ENCODE measurements at regions of chr4 and their contacts with region 1.

Region 1: DNA sequence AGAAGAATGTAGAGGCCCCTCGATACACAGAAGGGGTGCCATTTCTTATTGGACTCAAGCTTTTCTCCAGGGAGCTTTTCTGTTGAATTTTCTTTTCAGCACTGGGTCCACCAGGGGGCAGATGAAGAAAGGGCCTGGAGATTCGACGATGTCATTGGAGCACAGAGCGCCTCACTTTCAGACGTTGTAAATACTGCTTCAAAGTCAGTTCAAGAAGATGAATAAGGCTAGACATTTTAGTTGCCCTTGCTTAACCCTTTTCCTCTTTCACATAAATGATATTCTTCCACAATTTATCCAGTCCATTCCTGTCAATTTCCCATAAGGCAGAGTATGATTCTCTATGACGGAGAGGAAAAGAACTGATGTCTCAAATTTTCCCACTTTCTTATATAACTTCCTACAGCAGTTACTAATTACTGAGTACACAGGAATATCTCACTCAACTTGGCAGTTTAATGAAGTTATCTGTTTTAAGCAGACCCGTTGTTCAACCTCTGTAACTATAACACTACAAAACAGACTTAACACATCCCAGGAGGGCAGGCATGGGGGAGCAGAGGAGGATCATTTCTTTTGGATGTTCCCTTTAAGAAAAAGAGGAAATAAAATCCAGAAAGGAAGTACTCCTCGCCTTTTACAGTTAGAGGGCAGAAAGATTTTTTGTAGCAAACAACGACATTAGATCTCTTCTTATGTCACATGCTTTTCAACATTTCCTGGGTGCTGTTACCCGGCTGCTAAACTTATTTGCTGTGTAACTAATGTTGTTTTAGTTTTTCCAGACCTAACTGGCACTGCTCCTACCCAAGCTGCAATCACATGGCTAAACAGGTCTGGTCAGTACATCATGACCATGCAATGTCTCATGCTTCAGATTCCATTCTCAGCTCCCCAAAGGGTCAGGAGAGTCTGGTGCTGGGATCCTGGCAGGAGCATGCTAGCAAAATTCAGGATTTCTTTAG is 12.2 kb upstream of the CENPU start:
- DNase-seq: peak; percentile 56
- H3K4me3 Mint-ChIP-seq: no peak overlapping the region
- H3K27ac Mint-ChIP-seq: no peak overlapping the region
- H3K4me1 Mint-ChIP-seq: peaks cover 11% of the 10 kb centered on the region
- H3K27me3 Mint-ChIP-seq: no peaks in the 10 kb centered on the region

Region 2: GRCh38 chr4:184695178-184695896 is 50.8 kb before region 1 on chr4:
- intact Hi-C with region 1: no loop called
- DNase-seq: no peak
- H3K4me3 Mint-ChIP-seq: no peak overlapping the region
- H3K27ac Mint-ChIP-seq: peak overlapping the region; percentile 38
- H3K4me1 Mint-ChIP-seq: no peaks in the 10 kb centered on the region
- H3K27me3 Mint-ChIP-seq: no peaks in the 10 kb centered on the region

Region 3: GRCh38 chr4:184907216-184907615 is 161.1 kb after region 1 on chr4:
- intact Hi-C with region 1: loop called (anchors 1 kb)
- DNase-seq: no peak
- H3K4me3 Mint-ChIP-seq: no peak overlapping the region
- H3K27ac Mint-ChIP-seq: no peak overlapping the region
- H3K4me1 Mint-ChIP-seq: peaks cover 6% of the 10 kb centered on the region
- H3K27me3 Mint-ChIP-seq: peaks cover 10% of the 10 kb centered on the region

Region 4: DNA sequence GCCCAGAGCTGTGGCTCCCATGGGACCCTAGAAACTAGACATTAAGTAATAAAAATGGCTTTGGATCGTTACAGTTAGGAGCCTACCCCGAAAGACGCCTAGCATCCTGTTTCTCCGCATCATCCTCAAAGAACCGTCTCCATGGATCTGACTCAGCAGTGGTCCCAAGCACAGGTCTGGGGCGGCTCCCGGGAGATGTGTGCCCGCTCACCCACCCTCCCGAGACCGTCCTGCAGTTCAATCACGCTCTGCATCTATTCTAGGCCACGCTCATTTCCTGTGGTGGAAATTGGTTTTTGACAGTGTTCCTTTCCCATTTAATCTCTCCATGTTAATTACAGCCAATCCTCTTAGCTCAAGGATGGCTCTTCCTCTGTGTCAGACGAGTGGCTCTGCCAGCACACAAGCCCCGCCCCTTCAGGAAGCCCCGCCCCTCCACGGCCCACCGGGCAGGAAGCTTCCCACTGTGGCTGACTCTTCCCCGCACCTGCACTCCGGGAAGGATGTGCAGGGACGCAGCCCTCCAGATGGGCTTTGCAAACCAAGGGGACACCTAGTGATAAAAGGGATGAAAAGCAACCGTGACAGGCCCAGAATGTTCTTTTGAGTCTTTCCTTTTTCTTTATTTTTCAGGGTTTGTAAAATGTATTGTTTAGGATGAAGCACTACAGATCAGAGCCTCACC is 237.7 kb after region 1 on chr4:
- intact Hi-C with region 1: loop called (anchors 5 kb)
- DNase-seq: no peak
- H3K4me3 Mint-ChIP-seq: no peak overlapping the region
- H3K27ac Mint-ChIP-seq: no peak overlapping the region
- H3K4me1 Mint-ChIP-seq: no peaks in the 10 kb centered on the region
- H3K27me3 Mint-ChIP-seq: peaks cover 8% of the 10 kb centered on the region

Region 5: DNA sequence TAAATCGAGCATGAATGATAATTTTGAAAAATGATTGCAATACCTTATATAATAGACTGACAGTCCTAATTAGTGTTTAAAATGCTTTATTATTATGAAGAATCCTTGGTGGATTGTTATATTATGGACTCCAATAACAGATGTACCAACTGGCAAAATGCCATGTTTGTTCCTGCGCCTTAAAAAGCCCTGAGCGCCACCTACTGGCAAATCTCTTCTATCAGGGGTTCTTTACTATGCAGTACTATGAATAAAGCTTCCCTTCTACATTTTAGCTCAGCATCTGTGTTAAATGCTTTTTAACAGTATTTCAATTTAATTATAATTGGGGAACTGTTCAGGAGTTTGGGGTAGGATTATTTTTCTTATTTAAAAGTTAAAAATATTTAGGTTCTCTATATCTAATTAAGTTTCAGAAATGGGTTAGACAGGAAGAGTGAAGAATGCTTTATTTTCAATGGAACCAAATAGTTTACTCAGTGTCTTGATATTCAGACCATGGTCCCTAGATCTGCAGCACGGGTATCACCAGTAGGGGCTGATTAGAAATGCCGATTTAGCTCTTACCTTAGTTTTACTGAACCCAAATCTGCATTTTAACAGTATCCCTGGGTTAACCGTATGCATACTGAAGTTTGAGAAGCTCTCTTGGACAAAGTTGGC is 437.6 kb after region 1 on chr4:
- intact Hi-C with region 1: no loop called
- DNase-seq: peak; percentile 49
- H3K4me3 Mint-ChIP-seq: no peak overlapping the region
- H3K27ac Mint-ChIP-seq: no peak overlapping the region
- H3K4me1 Mint-ChIP-seq: peaks cover 14% of the 10 kb centered on the region
- H3K27me3 Mint-ChIP-seq: no peaks in the 10 kb centered on the region

Measured in activated T-helper 2 cell treated with anti-CD3 and anti-CD28 coated beads, Interferon-gamma antibody, Interleukin-2, Interleukin-4, amounts not matched to agents 10 μg/mL and 5 μg/mL and 100 μg/mL, durations not matched to agents 14 hours and 24 hours and 36 hours (primary cell).